ENCODE measurements at regions of chr13 and their contacts with region 1.

Region 1: DNA sequence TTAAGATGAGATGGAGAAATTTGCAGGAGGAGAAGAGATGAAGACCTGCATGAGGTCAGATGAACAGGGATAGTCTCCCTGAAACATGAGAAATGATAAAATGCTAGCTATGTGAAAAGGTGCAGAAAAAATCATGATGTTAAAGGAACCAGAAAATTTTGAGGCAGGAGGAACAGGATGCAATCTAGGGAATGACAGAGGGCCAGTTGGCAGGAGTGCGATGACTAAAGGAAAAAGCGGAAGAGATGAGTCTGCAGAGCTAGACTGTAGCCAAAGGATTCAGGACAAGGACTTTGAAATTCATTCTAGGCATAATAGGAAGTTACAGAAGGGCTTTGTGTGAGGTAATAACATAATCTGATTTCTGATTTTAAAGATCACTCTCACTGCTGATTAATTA is 77.9 kb downstream of the TRPC4 start:
- DNase-seq: no peak
- H3K4me3 ChIP-seq: no peak overlapping the region
- H3K27ac ChIP-seq: no peak overlapping the region
- H3K4me1 ChIP-seq: no peaks in the 10 kb centered on the region
- H3K27me3 ChIP-seq: peaks cover 6% of the 10 kb centered on the region
- CTCF ChIP-seq: no peak

Region 2: GRCh38 chr13:37960427-37960826 is 168.7 kb after region 1 on chr13:
- CTCF ChIA-PET with region 1: interaction called, 13 read pairs
- dilution Hi-C with region 1: no loop called
- in situ Hi-C with region 1: no loop called
- intact Hi-C with region 1: no loop called
- DNase-seq: no peak
- H3K4me3 ChIP-seq: no peak overlapping the region
- H3K27ac ChIP-seq: no peak overlapping the region
- H3K4me1 ChIP-seq: peaks cover 5% of the 10 kb centered on the region
- H3K27me3 ChIP-seq: no peaks in the 10 kb centered on the region
- CTCF ChIP-seq: peak; percentile 10 to 16